ENCODE measurements at regions of chr14 and their contacts with region 1.

Region 1: GRCh38 chr14:101731187-101732080 is 30.1 kb upstream of the PPP2R5C start:
- DNase-seq: peak; percentile 96
- H3K4me3 Mint-ChIP-seq: peak overlapping the region; percentile 71
- H3K27ac Mint-ChIP-seq: peak overlapping the region; percentile 98
- H3K4me1 Mint-ChIP-seq: peaks cover 53% of the 10 kb centered on the region
- H3K27me3 Mint-ChIP-seq: no peaks in the 10 kb centered on the region

Region 2: DNA sequence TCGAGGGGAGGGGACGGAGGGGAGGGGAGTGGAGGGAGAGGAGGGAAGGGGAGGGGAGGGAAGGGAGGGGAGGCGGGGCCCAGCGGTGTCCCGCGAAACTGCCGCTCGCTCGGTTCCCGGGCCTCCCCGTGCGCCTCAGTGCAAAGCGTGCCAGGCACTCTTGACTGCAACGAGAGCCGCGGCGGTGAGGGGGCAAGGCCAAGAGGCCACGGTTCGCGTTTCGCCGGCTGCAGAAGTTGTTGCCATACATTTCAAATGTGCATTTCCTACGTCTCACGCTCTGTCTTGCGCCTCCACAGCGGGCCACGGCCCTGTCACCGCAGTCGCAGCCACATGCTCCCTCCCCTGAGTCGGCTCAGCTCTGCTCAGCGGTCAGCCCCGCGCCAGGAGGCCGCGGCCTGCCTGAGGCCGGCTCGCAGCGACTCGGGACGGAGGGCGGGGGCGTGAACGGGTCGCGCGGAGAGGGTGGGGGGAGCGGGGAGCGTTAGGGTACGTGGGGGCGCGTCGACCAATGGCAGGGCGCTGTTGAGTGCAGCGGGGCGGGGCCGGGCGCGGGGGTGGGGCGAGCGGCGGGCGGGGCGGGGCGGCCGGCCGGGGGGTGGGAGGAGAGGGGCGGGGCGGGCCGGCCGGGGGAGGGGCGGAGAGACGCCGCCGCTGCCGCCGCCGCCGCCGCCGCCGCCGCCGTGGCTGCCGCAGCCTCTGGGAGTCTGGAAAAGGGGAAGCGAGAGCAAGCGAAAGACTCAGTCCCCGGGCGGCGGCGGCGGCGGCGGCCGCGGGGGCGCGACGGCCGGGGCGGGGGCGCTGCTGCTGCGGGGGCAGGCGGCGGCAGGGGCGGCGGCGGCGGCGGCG is 29.8 kb after region 1 on chr14 and contains the start of gene PPP2R5C:
- CTCF ChIA-PET with region 1: no interaction called
- intact Hi-C with region 1: loop called (anchors 1 kb)
- DNase-seq: peak; percentile 85
- H3K4me3 Mint-ChIP-seq: peak within 1 kb of the TSS; percentile 91
- H3K27ac Mint-ChIP-seq: peak within 1 kb of the TSS; percentile 79
- H3K4me1 Mint-ChIP-seq: peaks cover 42% of the 10 kb centered on the region
- H3K27me3 Mint-ChIP-seq: no peaks in the 10 kb centered on the region
- total RNA-seq, gene PPP2R5C: 280 to 294 TPM

Region 3: GRCh38 chr14:101947906-101948665 is 216.7 kb after region 1 on chr14:
- CTCF ChIA-PET with region 1: no interaction called
- intact Hi-C with region 1: loop called (anchors 1 kb)
- DNase-seq: peak; percentile 100
- H3K4me3 Mint-ChIP-seq: peak overlapping the region; percentile 98
- H3K27ac Mint-ChIP-seq: peak overlapping the region; percentile 97
- H3K4me1 Mint-ChIP-seq: peaks cover 18% of the 10 kb centered on the region
- H3K27me3 Mint-ChIP-seq: peaks cover 20% of the 10 kb centered on the region

Region 4: DNA sequence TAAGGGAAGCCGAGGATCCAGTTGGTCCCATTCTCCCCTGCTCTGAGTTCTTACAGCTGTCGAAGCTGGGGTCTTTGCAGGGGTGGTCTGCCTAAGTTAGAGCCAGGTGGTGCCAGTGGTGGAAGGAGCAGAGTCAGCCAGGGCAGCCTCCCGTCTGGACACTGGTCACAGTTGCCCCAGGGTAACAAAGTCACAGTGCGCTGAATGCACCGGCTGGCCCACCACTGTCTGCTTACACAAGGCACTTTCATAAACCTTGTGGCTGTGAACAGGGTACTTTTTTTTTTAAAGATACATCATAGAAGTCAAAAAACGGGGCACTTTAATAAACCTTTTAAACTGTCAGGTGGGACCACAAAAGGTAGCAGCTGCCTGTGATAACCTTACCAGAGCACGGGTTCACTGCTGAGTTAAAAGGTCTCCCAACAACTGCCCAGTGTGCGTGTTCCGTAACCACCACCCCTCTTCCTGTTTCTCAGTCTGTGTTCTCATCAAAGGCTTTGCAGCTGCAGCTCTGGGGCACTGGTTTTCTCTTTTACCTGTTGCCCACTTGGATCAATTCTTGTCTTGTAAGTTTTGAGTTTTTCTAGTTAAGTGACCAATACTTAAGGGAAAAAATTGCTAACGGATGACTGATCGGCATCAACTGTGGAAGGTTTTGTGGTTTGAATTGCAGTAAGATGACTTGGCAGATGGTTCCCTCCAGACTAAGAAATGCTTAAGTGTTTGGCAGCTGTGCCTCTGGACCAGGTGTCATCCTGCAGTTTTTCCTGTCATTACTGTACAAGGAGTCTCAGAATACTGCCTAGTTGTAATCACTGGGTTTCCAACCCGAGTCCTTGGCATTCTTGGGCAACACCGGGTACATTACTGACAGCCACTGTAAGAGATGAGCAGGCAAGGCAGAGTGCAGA is 288.9 kb after region 1 on chr14:
- CTCF ChIA-PET with region 1: no interaction called
- intact Hi-C with region 1: loop called (anchors 2 kb)
- DNase-seq: peak; percentile 82
- H3K4me3 Mint-ChIP-seq: no peak overlapping the region
- H3K27ac Mint-ChIP-seq: peak overlapping the region; percentile 87
- H3K4me1 Mint-ChIP-seq: peaks cover 22% of the 10 kb centered on the region
- H3K27me3 Mint-ChIP-seq: no peaks in the 10 kb centered on the region